IMR-90 (cell line): ENCODE measurements at regions of chr9 and their contacts with region 1.

Region 1: DNA sequence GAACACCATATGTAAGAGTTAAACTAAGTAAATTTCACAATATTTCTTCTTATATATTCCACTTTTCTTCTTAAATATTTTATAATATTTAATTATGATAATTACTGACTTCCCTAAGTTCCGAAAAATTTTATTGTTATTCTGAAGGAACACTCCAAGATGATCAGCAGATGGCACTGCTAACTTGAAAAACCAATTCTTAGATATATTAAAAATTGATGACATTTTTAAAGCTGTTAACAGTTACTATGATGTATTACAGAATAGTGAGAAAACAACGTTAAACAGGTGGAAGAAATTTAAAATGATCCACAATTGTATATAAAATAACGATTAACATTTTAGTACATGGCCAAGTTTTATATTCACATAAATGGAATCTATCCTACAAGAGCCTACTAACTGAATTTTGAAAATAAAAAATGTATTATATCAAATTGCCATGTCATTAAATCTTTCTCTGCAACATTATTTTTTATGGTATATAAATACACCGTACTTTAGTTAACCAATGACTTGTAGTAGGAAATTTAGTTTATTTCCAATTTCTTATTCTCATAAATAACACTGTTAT is 30.1 kb upstream of the MUSK start:
- DNase-seq: peak; percentile 54
- ATAC-seq: peak; percentile 72
- H3K4me3 ChIP-seq: no peak overlapping the region
- H3K27ac ChIP-seq: peak overlapping the region; percentile 49; the same call in 1 of the 2 replicates
- H3K4me1 ChIP-seq: peaks cover 6% of the 10 kb centered on the region; the same call in 1 of the 2 replicates
- H3K27me3 ChIP-seq: no peaks in the 10 kb centered on the region
- CTCF ChIP-seq: peak; percentile 57
- POLR2A ChIP-seq: 0 out of 2 replicates have a peak, but pooled peaks have one; percentile 38
- RAD21 ChIP-seq: peak; percentile 77

Region 2: DNA sequence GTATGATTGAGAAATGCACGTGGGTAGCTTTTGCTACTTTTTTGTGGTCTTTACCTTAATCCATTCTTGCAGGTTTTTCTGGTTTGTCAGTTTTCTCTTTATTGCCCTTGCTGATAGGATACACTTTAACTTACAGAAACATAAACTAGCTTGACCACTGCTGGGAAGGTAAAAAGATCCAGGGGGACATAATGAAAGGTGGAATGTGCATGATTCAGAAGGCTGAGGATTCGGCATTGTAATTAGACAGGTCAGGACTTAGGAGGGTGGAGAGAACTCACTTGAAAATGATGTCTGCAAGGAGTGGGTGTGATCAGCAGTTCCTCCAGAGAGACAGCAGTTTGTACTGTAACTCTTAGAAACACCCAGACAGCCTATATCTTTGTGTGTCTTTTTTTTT is 281.0 kb before region 1 on chr9:
- CTCF ChIA-PET with region 1: no interaction called
- POLR2A ChIA-PET with region 1: no interaction called
- dilution Hi-C with region 1: no loop called
- in situ Hi-C with region 1: no loop called
- intact Hi-C with region 1: no loop called
- DNase-seq: no peak
- ATAC-seq: no peak
- H3K4me3 ChIP-seq: no peak overlapping the region
- H3K27ac ChIP-seq: no peak overlapping the region
- H3K4me1 ChIP-seq: no peaks in the 10 kb centered on the region
- H3K27me3 ChIP-seq: no peaks in the 10 kb centered on the region; the same call in 1 of the 2 replicates
- CTCF ChIP-seq: no peak
- POLR2A ChIP-seq: no peak
- RAD21 ChIP-seq: no peak

Region 3: DNA sequence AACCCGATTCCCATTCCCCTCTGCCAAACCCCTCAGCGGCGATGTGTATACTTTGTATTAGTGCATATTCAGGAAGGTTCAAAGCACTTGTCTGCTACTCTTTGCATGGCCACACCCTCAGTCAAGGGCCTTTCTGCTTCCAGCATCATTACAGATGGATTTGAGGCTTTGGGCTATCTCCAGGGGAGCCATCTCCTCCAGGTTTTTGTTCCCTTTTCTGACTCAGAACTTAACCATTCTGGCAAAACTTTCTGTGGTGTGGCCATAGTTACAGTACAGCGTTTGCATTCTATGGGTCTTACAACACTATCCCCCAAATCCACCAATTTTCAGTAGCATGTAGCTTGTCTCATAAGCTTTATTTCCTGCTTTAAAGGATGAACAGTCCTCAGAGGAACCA is 23.0 kb before region 1 on chr9:
- CTCF ChIA-PET with region 1: no interaction called
- POLR2A ChIA-PET with region 1: no interaction called
- dilution Hi-C with region 1: no loop called
- in situ Hi-C with region 1: no loop called
- intact Hi-C with region 1: no loop called
- DNase-seq: peak; percentile 72
- ATAC-seq: peak; percentile 44
- H3K4me3 ChIP-seq: no peak overlapping the region
- H3K27ac ChIP-seq: no peak overlapping the region
- H3K4me1 ChIP-seq: peaks cover 2% of the 10 kb centered on the region; the same call in 1 of the 2 replicates
- H3K27me3 ChIP-seq: no peaks in the 10 kb centered on the region
- CTCF ChIP-seq: no peak
- POLR2A ChIP-seq: no peak
- RAD21 ChIP-seq: no peak

Region 4: DNA sequence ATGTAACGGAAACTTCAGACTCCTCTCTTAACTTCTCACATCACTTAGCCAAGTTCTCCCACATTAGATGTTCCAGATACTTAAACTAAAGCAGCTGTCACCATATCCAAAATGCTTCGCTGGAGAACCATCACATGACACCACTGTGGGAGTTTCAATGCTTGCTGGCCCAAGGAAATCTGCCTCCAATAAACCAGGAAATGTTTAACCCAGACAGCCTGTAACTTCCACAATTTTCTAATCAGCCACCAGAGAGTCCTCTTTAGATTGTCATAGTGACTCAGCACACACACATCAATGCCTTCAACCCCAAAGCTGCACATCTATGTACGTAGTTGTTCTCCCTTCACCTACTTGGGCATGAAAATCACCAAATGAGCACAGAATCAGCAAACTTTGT is 281.1 kb after region 1 on chr9:
- CTCF ChIA-PET with region 1: no interaction called
- POLR2A ChIA-PET with region 1: no interaction called
- dilution Hi-C with region 1: no loop called
- in situ Hi-C with region 1: loop called (anchors 25 kb)
- intact Hi-C with region 1: loop called (anchors 10 kb)
- DNase-seq: peak; percentile 90
- ATAC-seq: peak; percentile 18
- H3K4me3 ChIP-seq: no peak overlapping the region
- H3K27ac ChIP-seq: peak overlapping the region; percentile 88
- H3K4me1 ChIP-seq: peaks cover 33% of the 10 kb centered on the region
- H3K27me3 ChIP-seq: no peaks in the 10 kb centered on the region
- CTCF ChIP-seq: no peak
- POLR2A ChIP-seq: no peak
- RAD21 ChIP-seq: peak; percentile 33; the same call in 1 of the 2 replicates

Region 5: GRCh38 chr9:111016426-111017045 is 378.1 kb after region 1 on chr9:
- CTCF ChIA-PET with region 1: no interaction called
- POLR2A ChIA-PET with region 1: no interaction called
- dilution Hi-C with region 1: no loop called
- in situ Hi-C with region 1: loop called (anchors 10 kb)
- intact Hi-C with region 1: no loop called
- DNase-seq: peak; percentile 76
- ATAC-seq: peak; percentile 64
- H3K4me3 ChIP-seq: no peak overlapping the region
- H3K27ac ChIP-seq: peak overlapping the region; percentile 20; the same call in 1 of the 2 replicates
- H3K4me1 ChIP-seq: peaks cover 23% of the 10 kb centered on the region
- H3K27me3 ChIP-seq: no peaks in the 10 kb centered on the region
- CTCF ChIP-seq: no peak
- POLR2A ChIP-seq: no peak
- RAD21 ChIP-seq: no peak